Activated naive CD8-positive, alpha-beta T cell treated with anti-CD3 and anti-CD28 coated beads, Interleukin-2, amount 10 ng/mL, durations not matched to agents 7 days and 5 days (primary cell): ENCODE measurements at regions of chr2 and their contacts with region 1.

Region 1: DNA sequence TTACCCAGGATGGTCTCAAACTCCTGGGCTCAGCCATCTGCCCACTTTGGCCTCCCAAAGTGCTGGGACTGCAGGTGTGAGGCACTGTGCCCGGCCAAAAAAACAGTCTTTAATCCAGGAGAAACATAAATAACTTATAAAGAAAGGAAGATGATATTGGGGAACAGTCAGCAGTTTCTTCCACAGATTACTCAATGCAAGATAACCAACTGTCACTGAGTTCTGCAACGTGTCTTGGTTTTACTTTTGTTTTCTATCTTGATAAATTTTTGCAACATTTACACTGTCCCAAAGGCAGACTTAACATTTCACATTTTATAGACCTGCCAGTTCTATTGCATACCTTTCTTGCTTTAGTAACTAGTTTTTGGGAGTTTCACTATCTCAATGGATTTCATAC is 71.1 kb downstream of the ANKRD44 start:
- DNase-seq: no peak
- ATAC-seq: peak; percentile 45
- H3K4me3 Mint-ChIP-seq: peak overlapping the region; percentile 92
- H3K27ac Mint-ChIP-seq: peak overlapping the region; percentile 90
- H3K4me1 Mint-ChIP-seq: peaks cover 77% of the 10 kb centered on the region
- H3K27me3 Mint-ChIP-seq: no peaks in the 10 kb centered on the region

Region 2: DNA sequence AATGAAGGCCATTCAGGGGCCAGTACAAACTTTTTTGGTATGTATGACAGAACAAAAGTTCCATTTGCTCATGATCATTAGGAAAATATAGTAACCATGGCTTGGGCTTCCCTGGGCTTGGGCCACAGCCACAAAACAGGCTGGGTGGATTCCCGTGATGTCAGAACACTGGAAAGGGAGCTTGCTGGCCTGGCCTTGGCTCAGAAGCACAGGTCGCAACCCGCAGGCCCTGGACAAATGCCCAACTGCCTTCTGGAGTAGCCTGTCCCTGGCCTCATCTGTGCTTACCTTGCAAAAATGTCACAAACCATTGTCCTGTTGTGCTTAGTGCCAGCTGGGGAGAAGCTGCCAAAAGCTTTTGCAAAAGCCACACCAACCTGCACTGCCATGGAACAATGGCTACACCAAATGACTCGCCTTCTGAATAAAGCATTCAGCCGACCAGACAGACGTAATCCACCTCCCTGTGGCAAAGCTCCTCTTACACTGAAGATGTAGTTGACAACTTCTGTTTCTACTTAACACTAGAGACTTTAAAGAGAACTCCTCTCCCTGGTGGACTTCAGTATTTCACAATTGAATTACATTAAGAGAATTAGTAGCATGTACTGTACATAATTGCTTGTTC is 54.4 kb before region 1 on chr2:
- POLR2A ChIA-PET with region 1: no interaction called
- DNase-seq: no peak
- ATAC-seq: no peak
- H3K4me3 Mint-ChIP-seq: no peak overlapping the region
- H3K27ac Mint-ChIP-seq: peak overlapping the region; percentile 3
- H3K4me1 Mint-ChIP-seq: peaks cover 50% of the 10 kb centered on the region
- H3K27me3 Mint-ChIP-seq: no peaks in the 10 kb centered on the region

Region 3: GRCh38 chr2:197198890-197199289 is 40.5 kb before region 1 on chr2:
- POLR2A ChIA-PET with region 1: interaction called, 16 read pairs
- DNase-seq: peak; percentile 83
- ATAC-seq: peak; percentile 83
- H3K4me3 Mint-ChIP-seq: peak overlapping the region; percentile 82
- H3K27ac Mint-ChIP-seq: peak overlapping the region; percentile 92
- H3K4me1 Mint-ChIP-seq: peaks cover 77% of the 10 kb centered on the region
- H3K27me3 Mint-ChIP-seq: no peaks in the 10 kb centered on the region

Region 4: GRCh38 chr2:197255543-197255942 is 16.1 kb after region 1 on chr2:
- POLR2A ChIA-PET with region 1: interaction called, 10 read pairs
- DNase-seq: peak; percentile 77
- ATAC-seq: peak; percentile 95
- H3K4me3 Mint-ChIP-seq: peak overlapping the region; percentile 84
- H3K27ac Mint-ChIP-seq: peak overlapping the region; percentile 92
- H3K4me1 Mint-ChIP-seq: peaks cover 62% of the 10 kb centered on the region
- H3K27me3 Mint-ChIP-seq: no peaks in the 10 kb centered on the region

Region 5: GRCh38 chr2:197286805-197287598 is 47.6 kb after region 1 on chr2:
- POLR2A ChIA-PET with region 1: interaction called, 10 read pairs
- DNase-seq: no peak
- ATAC-seq: peak; percentile 93
- H3K4me3 Mint-ChIP-seq: peak overlapping the region; percentile 73
- H3K27ac Mint-ChIP-seq: peak overlapping the region; percentile 95
- H3K4me1 Mint-ChIP-seq: peaks cover 58% of the 10 kb centered on the region
- H3K27me3 Mint-ChIP-seq: no peaks in the 10 kb centered on the region

Region 6: DNA sequence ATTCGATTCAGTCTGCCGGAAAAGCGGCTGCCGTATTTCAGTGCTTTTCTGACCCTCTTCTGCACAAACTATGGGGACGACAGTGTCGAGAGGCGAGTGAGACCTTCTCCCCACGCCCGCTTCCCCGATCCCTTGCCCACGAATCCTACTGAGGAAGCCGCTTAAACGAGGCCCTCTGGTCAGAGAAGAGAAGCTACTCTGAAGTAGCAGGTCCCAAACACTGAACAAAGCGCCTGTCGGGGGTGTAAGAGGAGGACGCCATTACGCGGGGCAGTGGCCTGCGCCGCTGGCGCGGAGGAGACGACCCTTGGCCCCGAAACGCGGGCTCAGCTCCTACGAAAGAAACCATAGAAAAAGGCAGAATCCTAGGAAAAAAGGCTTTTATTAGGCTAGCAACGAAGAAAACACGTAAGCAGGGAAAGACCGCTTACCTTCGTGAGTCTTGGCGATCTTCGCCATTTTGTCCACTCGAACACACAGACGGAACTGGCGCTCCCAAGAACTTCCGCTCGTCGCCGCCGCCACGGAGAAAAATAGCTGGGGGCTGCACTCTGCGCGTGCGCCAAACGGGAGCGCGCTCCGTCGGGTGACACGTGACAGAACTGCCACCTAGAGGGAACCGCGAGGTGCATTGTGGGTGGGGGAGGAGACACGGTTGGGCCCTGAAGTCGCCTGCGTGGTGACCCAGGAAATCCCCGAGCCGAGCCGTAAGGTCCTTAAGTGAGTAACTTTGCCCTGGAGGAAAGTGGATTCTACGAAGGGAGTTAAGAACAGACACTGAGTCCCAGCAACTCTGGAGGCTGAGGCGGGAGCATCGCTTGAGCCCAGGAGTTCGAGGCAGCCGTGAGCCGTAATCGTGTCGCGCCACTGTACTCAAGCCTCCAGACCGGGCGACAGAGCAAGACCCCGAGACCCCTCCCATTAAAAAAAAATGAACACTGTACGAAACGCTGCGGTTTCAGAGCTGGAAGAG is 195.4 kb after region 1 on chr2 and contains the start of gene SF3B1:
- POLR2A ChIA-PET with region 1: no interaction called
- DNase-seq: peak; percentile 99
- ATAC-seq: peak; percentile 95
- H3K4me3 Mint-ChIP-seq: peak within 1 kb of the TSS; percentile 85
- H3K27ac Mint-ChIP-seq: peak within 1 kb of the TSS; percentile 100
- H3K4me1 Mint-ChIP-seq: peaks cover 38% of the 10 kb centered on the region
- H3K27me3 Mint-ChIP-seq: no peaks in the 10 kb centered on the region
- total RNA-seq, gene SF3B1: 388 to 392 TPM

Region 7: DNA sequence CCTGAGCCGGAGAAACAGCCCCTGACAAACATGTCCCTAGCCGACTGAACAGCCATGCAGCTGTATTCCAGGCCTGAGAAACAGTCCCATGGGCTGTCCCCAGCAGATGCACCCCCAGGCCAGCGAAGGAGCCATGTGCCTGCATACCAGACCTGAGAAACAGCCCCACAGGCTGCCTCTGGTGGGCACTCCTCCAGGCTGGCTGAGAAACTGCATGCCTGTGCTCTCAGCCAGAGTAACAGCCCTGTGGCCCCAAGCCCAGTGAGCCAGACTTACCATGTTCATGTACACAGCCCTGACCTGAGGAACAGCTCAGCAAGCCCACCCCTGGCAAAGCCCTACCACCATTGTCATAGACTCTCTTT is 520.8 kb after region 1 on chr2:
- POLR2A ChIA-PET with region 1: no interaction called
- DNase-seq: no peak
- ATAC-seq: no peak
- H3K4me3 Mint-ChIP-seq: no peak overlapping the region
- H3K27ac Mint-ChIP-seq: no peak overlapping the region
- H3K4me1 Mint-ChIP-seq: no peaks in the 10 kb centered on the region
- H3K27me3 Mint-ChIP-seq: peaks cover 7% of the 10 kb centered on the region